ENCODE measurements at regions of chr5 and their contacts with region 1.

Region 1: DNA sequence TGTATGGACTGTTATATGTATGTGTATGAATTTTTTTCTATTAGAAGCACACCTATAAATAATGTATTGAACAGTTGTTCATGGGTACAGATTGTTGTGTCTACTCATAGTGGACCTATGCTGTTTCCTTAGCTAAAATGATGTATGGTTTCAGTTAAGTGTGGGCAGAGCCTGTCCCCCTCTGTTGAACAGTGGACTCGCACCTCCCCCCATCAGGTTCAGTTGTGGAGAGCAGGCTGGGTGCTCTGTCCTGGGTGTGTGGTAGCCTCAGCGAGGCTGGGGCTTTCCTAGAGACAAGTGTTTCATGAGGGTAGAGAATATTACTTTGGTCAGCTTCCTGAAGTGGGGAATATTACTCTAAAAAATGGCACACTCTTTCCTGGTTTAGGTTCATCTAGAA is 47.4 kb upstream of the LRRTM2 start:
- DNase-seq: no peak
- H3K4me3 ChIP-seq: no peak overlapping the region
- H3K27ac ChIP-seq: no peak overlapping the region
- H3K4me1 ChIP-seq: peaks cover 8% of the 10 kb centered on the region
- H3K27me3 ChIP-seq: no peaks in the 10 kb centered on the region
- CTCF ChIP-seq: no peak
- POLR2A ChIP-seq: no peak

Region 2: DNA sequence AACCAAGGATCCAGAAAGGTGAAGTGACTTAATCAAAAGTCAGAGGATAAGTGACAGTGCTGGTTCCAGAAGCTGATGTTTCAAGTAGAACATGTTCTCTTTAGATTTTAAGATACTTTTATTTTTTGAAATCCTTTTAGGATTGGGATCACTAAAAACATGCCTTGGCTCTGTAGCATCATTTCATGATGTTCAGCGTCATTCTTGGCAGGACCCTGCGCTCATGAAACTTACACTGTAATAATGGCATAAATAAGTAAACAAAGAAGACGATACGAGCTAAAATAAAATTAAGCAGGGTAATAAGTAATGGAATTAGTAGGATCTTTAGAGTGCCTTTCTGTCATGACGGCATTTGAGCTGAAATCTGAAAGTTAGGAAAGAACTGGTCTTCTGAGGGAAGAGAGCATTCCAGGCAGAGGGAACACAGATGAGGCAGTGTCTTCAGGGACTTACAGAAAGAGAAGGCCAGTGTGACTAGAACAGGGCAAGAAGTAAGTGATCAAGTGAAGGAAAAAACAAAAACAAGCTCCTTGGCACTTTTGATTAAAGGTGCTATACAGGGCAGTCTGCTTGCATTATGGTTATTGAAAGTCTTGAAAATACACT is 149.4 kb before region 1 on chr5:
- intact Hi-C with region 1: no loop called
- DNase-seq: no peak
- H3K4me3 ChIP-seq: no peak overlapping the region
- H3K27ac ChIP-seq: no peak overlapping the region
- H3K4me1 ChIP-seq: peaks cover 56% of the 10 kb centered on the region
- H3K27me3 ChIP-seq: no peaks in the 10 kb centered on the region
- CTCF ChIP-seq: no peak
- POLR2A ChIP-seq: no peak

Region 3: DNA sequence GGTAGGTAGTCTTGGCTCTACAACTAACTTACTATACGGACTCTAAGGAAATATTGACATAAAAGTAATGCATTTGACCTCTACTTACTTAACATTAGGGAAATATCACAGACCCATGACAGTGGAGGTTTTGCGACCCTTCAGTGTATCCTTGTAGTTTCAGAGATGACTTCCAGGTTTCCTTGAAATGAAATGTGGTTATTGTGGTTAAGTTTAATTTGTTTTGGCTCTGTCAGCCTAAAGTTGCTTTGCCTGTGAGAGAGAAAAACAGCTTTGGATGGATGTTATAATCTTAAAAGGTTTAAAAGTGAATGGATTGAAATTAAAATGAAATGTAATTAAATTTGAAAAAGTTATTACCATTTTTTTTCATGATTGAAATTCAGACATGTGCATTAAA is 90.3 kb before region 1 on chr5:
- intact Hi-C with region 1: no loop called
- DNase-seq: no peak
- H3K4me3 ChIP-seq: no peak overlapping the region
- H3K27ac ChIP-seq: no peak overlapping the region
- H3K4me1 ChIP-seq: peaks cover 23% of the 10 kb centered on the region
- H3K27me3 ChIP-seq: no peaks in the 10 kb centered on the region
- CTCF ChIP-seq: no peak
- POLR2A ChIP-seq: no peak

Region 4: DNA sequence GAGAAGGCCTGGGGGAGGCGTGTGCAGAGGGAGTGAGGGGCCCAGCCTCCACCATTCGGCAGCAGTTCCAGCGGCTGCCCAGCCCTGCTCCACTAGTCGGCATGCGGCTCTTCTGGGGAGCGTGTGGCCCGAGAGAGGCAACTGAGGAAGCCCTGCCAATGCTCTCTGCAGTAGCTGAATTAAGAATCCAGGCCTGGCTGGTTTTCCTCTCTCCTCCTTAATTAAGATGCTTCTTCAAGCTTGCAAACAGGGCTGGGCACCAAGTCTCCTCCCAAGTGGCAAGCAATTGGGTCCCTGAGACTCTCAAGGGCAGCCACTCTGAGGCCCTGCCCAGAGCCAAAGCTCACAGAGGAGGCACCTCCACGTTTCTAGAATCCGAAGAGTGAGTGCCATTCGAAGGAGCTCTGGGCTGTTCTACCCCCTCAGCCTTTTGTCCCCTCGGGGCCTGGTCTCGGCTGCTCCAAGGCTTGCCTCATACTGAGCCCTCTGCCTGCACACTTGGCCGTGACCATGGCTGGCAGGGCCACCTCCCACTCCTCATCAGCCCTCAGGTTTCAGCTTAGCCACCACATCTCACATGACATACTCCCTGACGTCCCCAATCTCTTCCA is 28.0 kb after region 1 on chr5:
- intact Hi-C with region 1: loop called (anchors 1 kb)
- DNase-seq: no peak
- H3K4me3 ChIP-seq: no peak overlapping the region
- H3K27ac ChIP-seq: no peak overlapping the region
- H3K4me1 ChIP-seq: peaks cover 37% of the 10 kb centered on the region
- H3K27me3 ChIP-seq: no peaks in the 10 kb centered on the region
- CTCF ChIP-seq: no peak
- POLR2A ChIP-seq: no peak

Region 5: GRCh38 chr5:140042643-140043500 is 1120.4 kb after region 1 on chr5 and contains the start of gene NRG2:
- intact Hi-C with region 1: no loop called
- DNase-seq: no peak
- H3K4me3 ChIP-seq: peak within 1 kb of the TSS; percentile 58 to 75
- H3K27ac ChIP-seq: peak within 1 kb of the TSS; percentile 63
- H3K4me1 ChIP-seq: peaks cover 10% of the 10 kb centered on the region
- H3K27me3 ChIP-seq: no peaks in the 10 kb centered on the region
- CTCF ChIP-seq: peak; percentile 11 to 24 (median 20)
- POLR2A ChIP-seq: no peak
- total RNA-seq, gene NRG2: 5.2 TPM